CD4-positive, alpha-beta T cell (primary cell): ENCODE measurements at regions of chr6 and their contacts with region 1.

Region 1: GRCh38 chr6:134640975-134641429 is 308.9 kb downstream of the ALDH8A1 start:
- DNase-seq: peak; percentile 63 to 89 (median 72)
- ATAC-seq: peak; percentile 97
- H3K4me3 ChIP-seq: no peak overlapping the region
- H3K4me3 Mint-ChIP-seq: no peak overlapping the region
- H3K27ac ChIP-seq: no peak overlapping the region
- H3K27ac Mint-ChIP-seq: no peak overlapping the region
- H3K4me1 ChIP-seq: peaks cover 4% of the 10 kb centered on the region
- H3K4me1 Mint-ChIP-seq: peaks cover 11% of the 10 kb centered on the region
- H3K27me3 ChIP-seq: no peaks in the 10 kb centered on the region
- H3K27me3 Mint-ChIP-seq: no peaks in the 10 kb centered on the region
- CTCF ChIP-seq: peak; percentile 97

Region 2: GRCh38 chr6:134161036-134161435 is 480.0 kb before region 1 on chr6:
- CTCF ChIA-PET with region 1: interaction called, 24 read pairs
- POLR2A ChIA-PET with region 1: interaction called, 3 read pairs
- intact Hi-C with region 1: no loop called
- DNase-seq: no peak
- ATAC-seq: no peak
- H3K4me3 ChIP-seq: no peak overlapping the region
- H3K4me3 Mint-ChIP-seq: no peak overlapping the region
- H3K27ac ChIP-seq: no peak overlapping the region
- H3K27ac Mint-ChIP-seq: no peak overlapping the region
- H3K4me1 ChIP-seq: no peaks in the 10 kb centered on the region
- H3K4me1 Mint-ChIP-seq: no peaks in the 10 kb centered on the region
- H3K27me3 ChIP-seq: no peaks in the 10 kb centered on the region
- H3K27me3 Mint-ChIP-seq: no peaks in the 10 kb centered on the region
- CTCF ChIP-seq: no peak

Region 3: DNA sequence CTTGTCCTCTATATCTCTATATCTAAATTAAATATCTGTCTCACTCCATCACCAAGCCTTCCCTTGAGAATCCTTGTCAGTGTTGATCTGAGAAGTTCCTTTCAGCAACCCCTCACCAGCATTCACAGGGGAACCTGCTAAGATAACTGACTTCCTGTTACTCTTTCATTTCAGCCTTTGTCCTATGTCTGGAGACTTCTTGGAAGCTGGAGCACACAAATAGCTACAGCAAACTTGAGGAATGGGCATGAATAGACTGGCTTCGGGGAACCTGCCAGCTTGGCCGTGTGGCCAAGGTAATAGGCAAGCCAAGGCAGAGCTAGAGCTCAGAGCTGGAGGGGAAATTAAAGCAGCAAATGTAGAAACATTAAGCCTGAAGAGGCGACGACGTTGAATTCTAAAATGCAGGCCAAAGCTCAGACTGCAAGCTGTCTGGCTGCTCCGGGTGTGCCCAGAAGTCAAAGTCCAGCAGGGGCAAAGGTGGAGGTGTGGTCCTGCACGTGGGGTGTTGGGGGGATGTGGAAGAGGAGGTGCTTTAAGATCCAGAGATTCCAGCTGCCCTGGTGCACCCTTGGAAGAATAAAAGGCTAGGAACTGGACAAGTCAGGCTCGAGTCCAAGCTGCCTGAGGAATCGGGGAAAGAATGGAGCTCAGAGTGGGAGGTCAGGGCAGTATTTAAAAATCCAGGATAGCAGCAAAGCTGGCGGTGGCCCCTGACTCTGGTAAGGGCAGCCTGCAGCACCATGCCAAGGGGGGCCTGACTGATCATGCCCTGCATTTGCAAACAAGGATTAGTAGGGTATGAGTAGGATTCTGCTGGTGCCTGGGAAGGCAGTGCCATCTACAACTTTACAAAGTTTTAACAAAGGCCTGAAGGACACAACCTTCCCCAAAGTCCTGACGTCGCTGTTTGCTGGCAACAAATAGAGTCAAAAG is 138.1 kb before region 1 on chr6:
- CTCF ChIA-PET with region 1: no interaction called
- POLR2A ChIA-PET with region 1: no interaction called
- intact Hi-C with region 1: no loop called
- DNase-seq: no peak
- ATAC-seq: no peak
- H3K4me3 ChIP-seq: no peak overlapping the region
- H3K4me3 Mint-ChIP-seq: no peak overlapping the region
- H3K27ac ChIP-seq: no peak overlapping the region
- H3K27ac Mint-ChIP-seq: no peak overlapping the region
- H3K4me1 ChIP-seq: no peaks in the 10 kb centered on the region
- H3K4me1 Mint-ChIP-seq: no peaks in the 10 kb centered on the region
- H3K27me3 ChIP-seq: no peaks in the 10 kb centered on the region
- H3K27me3 Mint-ChIP-seq: no peaks in the 10 kb centered on the region
- CTCF ChIP-seq: no peak

Region 4: DNA sequence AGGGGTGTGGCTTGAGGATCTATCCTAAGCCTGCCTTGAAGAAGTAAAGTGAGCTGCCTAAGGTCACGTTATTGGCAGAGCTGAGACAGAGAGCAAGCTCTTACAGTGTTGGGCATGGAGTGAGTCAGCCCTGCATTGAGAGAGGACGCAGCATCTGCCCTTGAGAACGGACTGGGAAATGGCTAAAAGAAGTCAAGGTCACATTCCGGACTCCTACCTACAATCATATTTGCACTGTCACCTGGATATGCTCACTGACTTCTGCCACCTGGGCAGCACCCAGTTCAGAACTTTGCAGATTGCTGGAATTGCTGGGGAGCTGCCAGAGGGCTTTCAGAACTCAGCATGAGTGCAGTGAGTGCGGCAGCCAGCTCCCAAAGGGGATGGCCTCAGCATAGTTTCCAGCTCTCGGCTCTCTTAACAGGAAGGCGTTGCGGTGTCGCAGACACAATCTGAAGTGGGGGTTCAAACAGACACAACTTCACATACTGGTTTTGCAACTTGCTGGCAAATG is 123.8 kb before region 1 on chr6:
- CTCF ChIA-PET with region 1: no interaction called
- POLR2A ChIA-PET with region 1: no interaction called
- intact Hi-C with region 1: loop called (anchors 10 kb)
- DNase-seq: no peak
- ATAC-seq: no peak
- H3K4me3 ChIP-seq: no peak overlapping the region
- H3K4me3 Mint-ChIP-seq: no peak overlapping the region
- H3K27ac ChIP-seq: no peak overlapping the region
- H3K27ac Mint-ChIP-seq: peak overlapping the region; percentile 57
- H3K4me1 ChIP-seq: peaks cover 13% of the 10 kb centered on the region
- H3K4me1 Mint-ChIP-seq: peaks cover 32% of the 10 kb centered on the region
- H3K27me3 ChIP-seq: no peaks in the 10 kb centered on the region
- H3K27me3 Mint-ChIP-seq: no peaks in the 10 kb centered on the region
- CTCF ChIP-seq: no peak

Region 5: DNA sequence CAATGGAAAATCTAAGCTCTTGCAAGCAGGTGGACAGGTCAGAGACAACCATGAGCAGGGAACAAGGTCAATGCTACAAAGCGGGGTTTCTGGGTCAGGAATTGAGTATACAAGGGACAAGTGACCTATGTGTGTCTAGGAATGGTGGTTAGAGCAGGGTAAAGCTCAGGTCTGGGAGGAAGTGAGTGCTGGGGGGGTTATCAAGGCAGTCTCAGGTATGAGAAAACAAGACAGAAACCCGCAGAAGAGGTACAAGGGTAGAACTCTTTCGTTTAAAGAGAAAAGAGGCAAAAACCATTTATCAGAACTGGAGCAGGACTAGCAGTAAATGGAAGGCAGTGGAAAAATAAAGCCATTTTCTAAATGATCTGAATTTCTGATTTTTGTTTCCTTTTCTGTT is 10.5 kb after region 1 on chr6:
- CTCF ChIA-PET with region 1: interaction called, 11 read pairs
- POLR2A ChIA-PET with region 1: no interaction called
- intact Hi-C with region 1: no loop called
- DNase-seq: no peak
- ATAC-seq: no peak
- H3K4me3 ChIP-seq: no peak overlapping the region
- H3K4me3 Mint-ChIP-seq: no peak overlapping the region
- H3K27ac ChIP-seq: no peak overlapping the region
- H3K27ac Mint-ChIP-seq: no peak overlapping the region
- H3K4me1 ChIP-seq: no peaks in the 10 kb centered on the region
- H3K4me1 Mint-ChIP-seq: no peaks in the 10 kb centered on the region
- H3K27me3 ChIP-seq: no peaks in the 10 kb centered on the region
- H3K27me3 Mint-ChIP-seq: no peaks in the 10 kb centered on the region
- CTCF ChIP-seq: no peak

Region 6: GRCh38 chr6:134741200-134741536 is 100.2 kb after region 1 on chr6:
- CTCF ChIA-PET with region 1: no interaction called
- POLR2A ChIA-PET with region 1: no interaction called
- intact Hi-C with region 1: no loop called
- DNase-seq: no peak
- ATAC-seq: no peak
- H3K4me3 ChIP-seq: no peak overlapping the region
- H3K4me3 Mint-ChIP-seq: no peak overlapping the region
- H3K27ac ChIP-seq: no peak overlapping the region
- H3K27ac Mint-ChIP-seq: no peak overlapping the region
- H3K4me1 ChIP-seq: no peaks in the 10 kb centered on the region
- H3K4me1 Mint-ChIP-seq: no peaks in the 10 kb centered on the region
- H3K27me3 ChIP-seq: peaks cover 0 to 1% of the 10 kb centered on the region in 2 experiments
- H3K27me3 Mint-ChIP-seq: peaks cover 42% of the 10 kb centered on the region
- CTCF ChIP-seq: no peak

Region 7: DNA sequence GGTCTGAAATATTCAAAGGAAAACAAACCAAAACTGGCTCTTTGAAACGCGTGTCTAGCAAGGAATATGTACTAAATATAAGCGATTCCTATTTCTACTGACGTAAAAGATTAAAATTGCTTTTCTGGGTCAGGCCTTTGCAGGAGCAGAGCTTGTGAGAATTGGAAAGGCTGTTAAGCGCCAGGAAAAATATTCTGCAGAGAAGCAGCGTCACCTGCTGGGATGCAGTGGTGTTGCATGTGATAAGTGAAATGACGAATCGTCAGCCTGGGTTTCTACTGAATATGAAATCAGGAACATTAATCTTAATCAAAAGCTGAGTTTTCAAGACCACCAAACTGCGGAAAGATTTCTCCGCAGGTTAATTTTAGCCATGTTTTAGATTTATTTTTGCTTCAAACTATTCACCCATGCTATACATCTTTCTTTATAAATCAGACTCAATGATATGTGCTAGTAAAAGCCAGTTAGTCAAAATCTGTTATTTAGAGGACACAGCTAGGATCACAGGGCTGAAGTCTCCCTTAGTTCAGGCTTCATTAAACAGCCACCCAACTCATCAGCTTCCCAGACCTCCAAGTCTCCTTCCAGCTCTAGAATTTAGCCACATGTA is 241.5 kb after region 1 on chr6:
- CTCF ChIA-PET with region 1: interaction called, 3 read pairs
- POLR2A ChIA-PET with region 1: no interaction called
- intact Hi-C with region 1: loop called (anchors 2 kb)
- DNase-seq: peak; percentile 11 to 74 (median 43)
- ATAC-seq: peak; percentile 65
- H3K4me3 ChIP-seq: no peak overlapping the region
- H3K4me3 Mint-ChIP-seq: no peak overlapping the region
- H3K27ac ChIP-seq: no peak overlapping the region
- H3K27ac Mint-ChIP-seq: no peak overlapping the region
- H3K4me1 ChIP-seq: no peaks in the 10 kb centered on the region
- H3K4me1 Mint-ChIP-seq: no peaks in the 10 kb centered on the region
- H3K27me3 ChIP-seq: peaks cover 0 to 4% of the 10 kb centered on the region in 2 experiments
- H3K27me3 Mint-ChIP-seq: peaks cover 19% of the 10 kb centered on the region
- CTCF ChIP-seq: peak; percentile 83